ENCODE measurements at regions of chr17 and their contacts with region 1.

Region 1: DNA sequence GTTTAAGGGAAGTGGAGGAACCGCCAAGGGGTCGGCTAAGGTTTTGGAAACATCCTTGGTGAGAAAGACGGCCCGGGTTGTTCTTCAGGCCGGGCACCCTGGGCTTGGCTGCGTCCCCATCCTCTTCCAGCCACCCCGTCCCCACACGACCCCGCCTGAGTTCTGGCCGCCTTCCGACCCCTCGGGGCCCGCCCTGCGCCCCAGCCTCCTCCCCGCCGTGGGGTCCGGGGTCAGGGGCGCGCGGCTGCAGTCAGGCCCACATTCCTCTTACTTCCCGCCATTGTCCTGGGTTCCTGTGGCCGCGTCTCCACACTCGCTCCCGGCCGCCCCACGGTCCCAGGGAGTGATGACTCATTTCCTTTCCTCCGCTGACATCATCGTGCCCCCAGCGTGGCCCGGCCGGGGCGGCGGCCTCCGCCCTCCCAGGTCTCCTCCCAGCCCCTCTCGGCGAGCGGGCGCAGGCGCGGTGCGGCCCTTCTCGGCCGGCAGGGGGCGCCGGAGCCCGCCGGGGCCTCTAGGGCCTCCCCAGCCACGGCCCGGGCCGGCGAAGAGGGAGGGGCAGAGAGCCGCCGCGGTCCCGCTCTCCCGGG is 59.6 kb downstream of the WSB1 start:
- DNase-seq: peak; percentile 95 to 97 (median 96)
- ATAC-seq: peak; percentile 94 to 95
- H3K4me3 ChIP-seq: peak overlapping the region; percentile 49
- H3K27ac ChIP-seq: peak overlapping the region; percentile 69
- H3K4me1 ChIP-seq: peaks cover 6% of the 10 kb centered on the region
- H3K27me3 ChIP-seq: no peaks in the 10 kb centered on the region

Region 2: DNA sequence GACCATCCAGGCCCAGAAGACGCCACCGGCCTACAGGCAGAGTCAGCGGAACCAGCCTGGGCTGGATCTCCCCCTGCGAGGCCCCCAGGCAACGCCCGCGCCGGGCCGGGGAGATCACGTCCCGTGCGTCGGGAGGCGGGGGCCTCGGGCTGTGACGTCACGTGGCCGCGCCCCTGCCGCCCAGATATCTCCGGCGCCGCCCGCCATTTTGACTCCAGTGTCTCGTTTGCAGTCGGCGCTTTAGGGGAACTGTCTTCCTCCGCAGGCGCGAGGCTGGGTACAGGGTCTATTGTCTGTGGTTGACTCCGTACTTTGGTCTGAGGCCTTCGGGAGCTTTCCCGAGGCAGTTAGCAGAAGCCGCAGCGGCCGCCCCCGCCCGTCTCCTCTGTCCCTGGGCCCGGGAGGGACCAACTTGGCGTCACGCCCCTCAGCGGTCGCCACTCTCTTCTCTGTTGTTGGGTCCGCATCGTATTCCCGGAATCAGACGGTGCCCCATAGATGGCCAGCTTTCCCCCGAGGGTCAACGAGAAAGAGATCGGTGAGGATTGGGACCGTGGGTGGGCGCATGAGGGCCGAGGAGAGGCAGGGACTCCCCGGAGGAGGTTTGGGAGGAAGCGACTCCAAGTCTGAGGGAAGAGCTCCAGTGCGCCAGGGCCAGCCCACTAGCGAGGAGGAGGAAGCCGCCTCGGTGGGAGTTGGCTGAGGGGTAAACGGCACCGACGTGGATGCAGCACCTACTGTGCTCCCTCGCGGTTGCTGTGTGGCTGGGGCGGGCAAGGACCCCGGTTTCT is 59.5 kb before region 1 on chr17 and contains the start of gene WSB1:
- intact Hi-C with region 1: loop called in 1 of 4 experiments (anchors 2 kb)
- DNase-seq: peak; percentile 95 to 98 (median 98)
- ATAC-seq: peak; percentile 97
- H3K4me3 ChIP-seq: peak within 1 kb of the TSS; percentile 64
- H3K27ac ChIP-seq: peak within 1 kb of the TSS; percentile 96
- H3K4me1 ChIP-seq: peaks cover 10% of the 10 kb centered on the region
- H3K27me3 ChIP-seq: no peaks in the 10 kb centered on the region
- total RNA-seq, gene WSB1: 74.6 to 130 (median 91.7) TPM

Region 3: GRCh38 chr17:27430882-27431491 is 77.4 kb after region 1 on chr17:
- intact Hi-C with region 1: loop called in 1 of 4 experiments (anchors 5 kb)
- DNase-seq: peak in 1 of 3 donors; percentile 78
- ATAC-seq: peak; percentile 52 to 54
- H3K4me3 ChIP-seq: no peak overlapping the region
- H3K27ac ChIP-seq: no peak overlapping the region
- H3K4me1 ChIP-seq: no peaks in the 10 kb centered on the region
- H3K27me3 ChIP-seq: no peaks in the 10 kb centered on the region

Region 4: GRCh38 chr17:27455914-27456680 is 102.5 kb after region 1 on chr17 and contains the start of gene KSR1:
- intact Hi-C with region 1: loop called in 1 of 4 experiments (anchors 10 kb)
- DNase-seq: peak; percentile 82 to 93 (median 90)
- ATAC-seq: peak; percentile 94
- H3K4me3 ChIP-seq: peak within 1 kb of the TSS; percentile 92
- H3K27ac ChIP-seq: peak within 1 kb of the TSS; percentile 55
- H3K4me1 ChIP-seq: peaks cover 5% of the 10 kb centered on the region
- H3K27me3 ChIP-seq: no peaks in the 10 kb centered on the region
- total RNA-seq, gene KSR1: 13.1 to 22.7 (median 14.1) TPM

Region 5: GRCh38 chr17:27601069-27601975 is 247.8 kb after region 1 on chr17:
- intact Hi-C with region 1: loop called (anchors 2 to 5 kb)
- DNase-seq: peak; percentile 75 to 91 (median 86)
- ATAC-seq: peak; percentile 33 to 70
- H3K4me3 ChIP-seq: no peak overlapping the region
- H3K27ac ChIP-seq: no peak overlapping the region
- H3K4me1 ChIP-seq: no peaks in the 10 kb centered on the region
- H3K27me3 ChIP-seq: no peaks in the 10 kb centered on the region

Measured in right cardiac atrium (tissue), 5 donors.